ENCODE measurements at regions of chr3 and their contacts with region 1.

Region 1: DNA sequence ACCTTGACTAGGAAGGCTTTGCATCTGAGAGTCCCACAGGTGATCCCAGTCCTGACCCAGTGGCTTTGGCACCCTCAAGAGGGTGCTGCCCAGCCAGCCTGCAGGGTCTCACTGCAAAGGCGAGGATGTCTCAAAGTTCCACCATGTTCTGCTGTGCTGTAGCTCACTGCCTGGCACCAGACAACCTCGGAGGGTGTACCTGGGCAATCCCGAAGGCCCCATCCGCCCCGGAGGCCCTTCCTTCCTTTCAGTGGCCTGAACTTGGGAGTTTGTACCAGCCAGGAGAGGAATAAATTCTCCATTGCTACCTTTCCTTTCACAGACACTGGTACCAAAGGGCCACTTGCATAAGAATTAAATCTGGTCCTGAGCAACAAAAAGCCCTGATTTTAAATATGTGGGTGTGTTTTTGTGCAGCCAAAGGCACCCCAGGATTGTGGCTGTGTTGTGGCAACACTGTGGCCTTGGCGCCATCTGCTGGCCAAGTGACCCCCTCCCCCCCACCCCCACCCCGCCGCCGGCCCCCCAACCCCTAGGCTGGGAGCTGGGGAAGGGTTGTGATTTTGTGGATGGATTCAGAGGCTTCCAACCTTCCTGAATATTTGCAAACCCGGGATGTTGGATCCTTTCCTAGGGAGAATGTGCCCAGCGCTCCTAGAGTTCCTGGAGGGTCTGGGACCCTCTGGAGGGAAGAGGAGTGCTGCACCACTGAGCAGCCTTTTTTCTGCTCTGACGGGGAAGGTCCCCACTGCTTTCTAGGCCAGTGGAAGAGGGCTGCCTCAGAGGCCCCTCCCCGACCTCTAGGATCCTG is 9.7 kb upstream of the PTPN23 start:
- DNase-seq: peak in 1 of 4 donors; percentile 26
- ATAC-seq: no peak
- H3K4me3 ChIP-seq: no peak overlapping the region
- H3K27ac ChIP-seq: no peak overlapping the region
- H3K4me1 ChIP-seq: no peaks in the 10 kb centered on the region
- H3K27me3 ChIP-seq: no peaks in the 10 kb centered on the region
- CTCF ChIP-seq: peak in 2 of 7 experiments; percentile 27 to 38
- POLR2A ChIP-seq: no peak

Region 2: DNA sequence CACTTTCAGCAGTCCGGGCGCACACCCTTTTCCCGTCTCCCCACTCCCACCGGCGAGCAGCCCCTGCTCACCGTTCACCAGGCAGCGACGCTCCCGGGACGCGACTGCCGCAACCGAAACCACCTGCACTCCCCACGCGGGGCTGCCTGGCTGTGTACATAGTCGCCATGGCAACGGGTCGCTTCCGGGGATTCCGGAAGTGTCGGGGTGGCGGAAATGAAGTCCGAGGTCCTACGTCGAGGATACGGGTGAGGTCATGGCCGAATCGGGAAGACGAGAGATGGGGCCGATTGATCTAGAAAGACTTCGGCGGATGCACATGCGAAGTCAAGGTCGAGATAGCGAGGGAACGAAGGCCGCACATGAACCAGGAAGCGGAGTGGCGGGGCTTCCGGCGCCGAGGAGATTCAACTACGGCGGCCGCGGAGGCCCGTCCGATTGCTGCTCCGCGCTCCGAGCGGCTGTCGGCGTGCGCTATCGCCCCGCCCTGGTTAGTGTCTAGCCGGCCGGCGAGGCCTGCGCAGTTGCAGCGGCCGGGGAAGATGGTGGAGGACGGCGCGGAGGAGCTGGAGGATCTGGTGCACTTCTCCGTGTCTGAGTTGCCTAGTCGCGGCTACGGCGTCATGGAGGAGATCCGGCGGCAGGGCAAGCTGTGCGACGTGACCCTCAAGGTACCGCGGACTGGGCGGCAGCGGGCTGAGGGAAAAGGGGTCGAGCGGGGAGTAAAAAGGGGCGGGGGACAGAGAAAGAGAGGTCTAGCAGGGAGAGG is 88.5 kb before region 1 on chr3 and contains the starts of genes KIF9 and KLHL18:
- intact Hi-C with region 1: loop called (anchors 10 kb)
- DNase-seq: peak; percentile 95 to 97 (median 96)
- ATAC-seq: peak; percentile 94
- H3K4me3 ChIP-seq: peak within 1 kb of the TSS; percentile 82 to 95
- H3K27ac ChIP-seq: peak within 1 kb of the TSS; percentile 86 to 97 (median 96)
- H3K4me1 ChIP-seq: peaks cover 32% of the 10 kb centered on the region
- H3K27me3 ChIP-seq: no peaks in the 10 kb centered on the region
- CTCF ChIP-seq: peak in 1 of 7 experiments; percentile 16
- POLR2A ChIP-seq: peak; percentile 62 to 92 (median 81)
- total RNA-seq, gene KIF9: 5.6 to 8.0 TPM
- total RNA-seq, gene KLHL18: 7.3 to 8.6 TPM